Caco-2 (cell line): ENCODE measurements at regions of chr10 and their contacts with region 1.

Region 1: GRCh38 chr10:21173812-21174714 is 277.0 kb upstream of the NEBL start:
- DNase-seq: peak; percentile 87 to 91
- H3K4me3 ChIP-seq: peak overlapping the region; percentile 91
- H3K4me3 Mint-ChIP-seq: peak overlapping the region; percentile 94
- H3K27ac Mint-ChIP-seq: peak overlapping the region; percentile 88
- H3K4me1 ChIP-seq: peaks cover 44% of the 10 kb centered on the region
- H3K4me1 Mint-ChIP-seq: peaks cover 40% of the 10 kb centered on the region
- H3K27me3 ChIP-seq: no peaks in the 10 kb centered on the region
- H3K27me3 Mint-ChIP-seq: no peaks in the 10 kb centered on the region
- CTCF ChIP-seq: peak in 1 of 2 experiments; percentile 23

Region 2: DNA sequence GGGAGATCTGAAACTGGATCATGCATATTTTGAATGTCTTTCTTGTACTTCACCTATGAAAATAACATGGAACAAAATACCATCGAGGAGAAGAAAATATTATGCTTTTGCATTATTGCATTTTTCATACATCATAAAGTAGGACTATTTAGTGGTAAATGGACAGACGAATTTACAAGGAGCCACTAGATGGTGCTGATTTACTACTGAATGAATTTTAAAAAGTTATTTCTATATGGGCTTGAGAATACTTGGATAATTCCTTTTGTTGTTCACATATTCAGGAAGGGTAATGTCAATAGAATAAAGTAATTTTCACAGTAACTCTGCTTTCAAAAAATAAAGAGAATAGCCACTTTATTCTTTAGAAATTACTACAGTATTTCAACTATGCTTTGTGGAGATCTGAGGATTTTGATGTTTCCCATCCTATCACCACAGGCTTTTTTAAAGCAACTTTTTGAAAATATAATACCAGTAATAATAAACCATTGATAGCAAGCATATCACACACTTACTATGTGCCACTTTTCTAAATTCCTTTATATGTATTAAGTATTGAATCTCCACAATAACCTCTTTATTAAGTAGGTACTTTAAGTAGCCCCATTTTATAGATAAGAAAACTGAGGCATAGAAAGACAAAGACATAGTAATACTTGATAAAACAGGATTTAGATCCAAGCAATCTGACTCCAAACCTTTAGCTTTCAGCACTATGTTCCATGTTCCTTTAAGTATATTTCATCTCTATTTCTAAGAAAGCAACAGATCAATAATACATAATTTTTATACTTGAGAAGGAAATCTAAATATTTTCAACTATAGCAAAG is 315.6 kb before region 1 on chr10:
- CTCF ChIA-PET with region 1: no interaction called
- POLR2A ChIA-PET with region 1: no interaction called
- intact Hi-C with region 1: loop called (anchors 5 kb)
- DNase-seq: peak in 1 of 2 experiments; percentile 35
- H3K4me3 ChIP-seq: no peak overlapping the region
- H3K4me3 Mint-ChIP-seq: no peak overlapping the region
- H3K27ac Mint-ChIP-seq: no peak overlapping the region
- H3K4me1 ChIP-seq: no peaks in the 10 kb centered on the region
- H3K4me1 Mint-ChIP-seq: no peaks in the 10 kb centered on the region
- H3K27me3 ChIP-seq: no peaks in the 10 kb centered on the region
- H3K27me3 Mint-ChIP-seq: no peaks in the 10 kb centered on the region
- CTCF ChIP-seq: peak; percentile 55 to 68

Region 3: GRCh38 chr10:20898866-20899535 is 275.1 kb before region 1 on chr10:
- CTCF ChIA-PET with region 1: no interaction called
- POLR2A ChIA-PET with region 1: no interaction called
- intact Hi-C with region 1: no loop called
- DNase-seq: no peak
- H3K4me3 ChIP-seq: no peak overlapping the region
- H3K4me3 Mint-ChIP-seq: no peak overlapping the region
- H3K27ac Mint-ChIP-seq: no peak overlapping the region
- H3K4me1 ChIP-seq: peaks cover 14% of the 10 kb centered on the region
- H3K4me1 Mint-ChIP-seq: peaks cover 7% of the 10 kb centered on the region
- H3K27me3 ChIP-seq: no peaks in the 10 kb centered on the region
- H3K27me3 Mint-ChIP-seq: no peaks in the 10 kb centered on the region
- CTCF ChIP-seq: no peak

Region 4: DNA sequence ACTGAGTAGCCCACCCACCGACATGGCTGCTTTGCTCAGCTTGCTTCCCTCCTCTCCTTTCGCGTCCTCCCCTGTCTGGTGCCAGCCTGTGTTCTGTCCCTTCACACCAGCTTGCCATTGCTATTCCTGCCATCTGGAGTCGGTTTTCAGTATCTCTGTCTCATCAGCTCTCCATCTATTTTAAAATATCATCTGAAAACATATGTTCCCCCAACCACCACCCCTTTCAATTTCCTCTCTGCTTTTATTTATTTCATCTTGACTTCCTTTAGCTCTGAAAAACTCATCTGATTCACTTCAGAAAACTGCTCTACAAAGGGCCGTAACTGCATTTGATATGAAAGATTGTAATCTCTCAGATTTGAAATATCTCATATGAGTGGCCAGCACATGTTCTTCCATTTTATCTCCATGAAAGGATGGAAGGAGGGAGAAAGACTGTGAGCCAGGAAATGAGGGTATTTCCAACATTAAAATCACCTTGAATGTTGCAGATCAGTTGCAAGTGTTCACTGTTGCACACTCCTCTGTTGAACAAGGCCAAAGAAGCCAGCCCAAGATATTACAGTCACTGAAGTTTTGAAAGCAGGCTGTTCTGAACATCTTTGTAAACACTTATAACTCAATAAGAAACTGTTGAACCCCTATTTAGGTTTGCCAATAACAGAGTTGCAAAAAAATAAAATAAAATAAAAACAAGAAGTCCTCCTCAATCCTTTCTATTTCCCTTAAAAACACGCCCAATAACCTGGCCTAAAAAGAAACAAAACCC is 74.6 kb before region 1 on chr10:
- CTCF ChIA-PET with region 1: interaction called, 3 read pairs
- POLR2A ChIA-PET with region 1: interaction called, 3 read pairs
- intact Hi-C with region 1: loop called (anchors 1 kb)
- DNase-seq: no peak
- H3K4me3 ChIP-seq: no peak overlapping the region
- H3K4me3 Mint-ChIP-seq: no peak overlapping the region
- H3K27ac Mint-ChIP-seq: peak overlapping the region; percentile 96
- H3K4me1 ChIP-seq: peaks cover 26% of the 10 kb centered on the region
- H3K4me1 Mint-ChIP-seq: peaks cover 43% of the 10 kb centered on the region
- H3K27me3 ChIP-seq: no peaks in the 10 kb centered on the region
- H3K27me3 Mint-ChIP-seq: no peaks in the 10 kb centered on the region
- CTCF ChIP-seq: no peak

Region 5: DNA sequence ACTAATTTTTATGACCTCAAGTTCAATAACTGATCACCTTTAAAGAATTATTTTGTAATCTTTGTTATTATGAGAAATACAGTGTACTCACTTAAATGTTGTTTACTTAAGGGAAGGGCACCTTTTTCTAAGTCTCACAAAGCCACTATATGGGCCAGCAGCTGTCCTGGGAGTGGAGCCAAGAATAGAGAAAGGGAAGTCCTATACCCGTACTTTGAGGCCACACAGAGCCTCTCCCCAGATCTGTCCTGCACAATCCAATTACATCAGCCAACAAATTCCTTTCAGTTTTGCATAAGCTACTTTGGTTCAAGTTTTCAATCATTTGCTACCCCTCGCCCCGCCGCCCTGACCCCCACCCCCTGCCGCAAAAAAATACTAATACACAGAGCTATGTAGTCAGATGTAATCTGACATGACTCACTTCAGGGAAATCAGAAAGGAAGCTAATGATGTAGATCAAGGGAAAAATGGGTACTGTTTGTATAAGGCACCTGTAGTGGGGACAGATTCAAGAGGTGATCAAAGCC is 20.5 kb after region 1 on chr10:
- CTCF ChIA-PET with region 1: no interaction called
- POLR2A ChIA-PET with region 1: no interaction called
- intact Hi-C with region 1: loop called (anchors 1 kb)
- DNase-seq: no peak
- H3K4me3 ChIP-seq: no peak overlapping the region
- H3K4me3 Mint-ChIP-seq: peak overlapping the region; percentile 27
- H3K27ac Mint-ChIP-seq: peak overlapping the region; percentile 74
- H3K4me1 ChIP-seq: peaks cover 19% of the 10 kb centered on the region
- H3K4me1 Mint-ChIP-seq: peaks cover 28% of the 10 kb centered on the region
- H3K27me3 ChIP-seq: no peaks in the 10 kb centered on the region
- H3K27me3 Mint-ChIP-seq: no peaks in the 10 kb centered on the region
- CTCF ChIP-seq: no peak

Region 6: GRCh38 chr10:21273400-21273932 is 99.4 kb after region 1 on chr10:
- CTCF ChIA-PET with region 1: interaction called, 5 read pairs
- POLR2A ChIA-PET with region 1: no interaction called
- intact Hi-C with region 1: loop called (anchors 1 kb)
- DNase-seq: no peak
- H3K4me3 ChIP-seq: no peak overlapping the region
- H3K4me3 Mint-ChIP-seq: no peak overlapping the region
- H3K27ac Mint-ChIP-seq: no peak overlapping the region
- H3K4me1 ChIP-seq: no peaks in the 10 kb centered on the region
- H3K4me1 Mint-ChIP-seq: peaks cover 10% of the 10 kb centered on the region
- H3K27me3 ChIP-seq: no peaks in the 10 kb centered on the region
- H3K27me3 Mint-ChIP-seq: no peaks in the 10 kb centered on the region
- CTCF ChIP-seq: no peak